CD4-positive, alpha-beta memory T cell (primary cell): ENCODE measurements at regions of chr1 and their contacts with region 1.

Region 1: DNA sequence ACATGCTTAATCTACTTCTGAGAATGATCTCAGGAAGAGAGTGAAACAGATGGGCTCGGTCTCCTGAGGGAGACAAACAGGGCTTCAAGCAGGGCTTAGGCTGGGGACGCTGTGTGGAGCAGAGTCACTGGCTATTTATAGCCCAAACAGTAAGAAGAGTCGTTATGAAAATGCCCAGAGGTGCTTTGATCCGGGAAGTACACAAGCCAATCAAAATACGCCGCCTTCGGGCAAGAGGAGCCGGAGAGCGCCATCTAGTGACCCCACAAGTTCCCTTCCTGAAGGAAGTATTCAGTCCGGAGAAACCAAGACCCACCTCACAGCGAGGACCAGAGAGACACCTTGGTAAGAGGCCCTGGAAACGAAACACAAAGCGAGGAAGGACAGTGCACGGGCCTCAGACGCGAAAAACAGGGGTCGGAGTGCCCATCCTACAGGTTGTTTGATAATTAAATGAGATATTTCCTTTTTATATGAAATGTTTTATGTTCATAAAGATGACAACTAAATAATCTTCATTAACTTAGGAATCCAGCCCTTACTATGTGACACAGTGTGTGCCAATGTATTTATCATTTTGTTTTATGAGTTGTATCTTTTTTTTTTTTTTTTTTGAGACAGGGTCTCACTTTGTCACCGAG is 25.0 kb upstream of the SCCPDH start:
- DNase-seq: peak; percentile 74 to 80 (median 77)
- H3K4me3 ChIP-seq: peak overlapping the region in 1 of 2 donors; percentile 4
- H3K4me3 Mint-ChIP-seq: peak overlapping the region; percentile 38 to 85 (median 74)
- H3K27ac ChIP-seq: no peak overlapping the region
- H3K27ac Mint-ChIP-seq: peak overlapping the region in 5 of 7 donors; percentile 11 to 53 (median 31)
- H3K4me1 ChIP-seq: peaks cover 10% of the 10 kb centered on the region
- H3K4me1 Mint-ChIP-seq: peaks cover 3 to 13% (median 6%) of the 10 kb centered on the region in 4 donors
- H3K27me3 ChIP-seq: no peaks in the 10 kb centered on the region
- H3K27me3 Mint-ChIP-seq: no peaks in the 10 kb centered on the region

Region 2: DNA sequence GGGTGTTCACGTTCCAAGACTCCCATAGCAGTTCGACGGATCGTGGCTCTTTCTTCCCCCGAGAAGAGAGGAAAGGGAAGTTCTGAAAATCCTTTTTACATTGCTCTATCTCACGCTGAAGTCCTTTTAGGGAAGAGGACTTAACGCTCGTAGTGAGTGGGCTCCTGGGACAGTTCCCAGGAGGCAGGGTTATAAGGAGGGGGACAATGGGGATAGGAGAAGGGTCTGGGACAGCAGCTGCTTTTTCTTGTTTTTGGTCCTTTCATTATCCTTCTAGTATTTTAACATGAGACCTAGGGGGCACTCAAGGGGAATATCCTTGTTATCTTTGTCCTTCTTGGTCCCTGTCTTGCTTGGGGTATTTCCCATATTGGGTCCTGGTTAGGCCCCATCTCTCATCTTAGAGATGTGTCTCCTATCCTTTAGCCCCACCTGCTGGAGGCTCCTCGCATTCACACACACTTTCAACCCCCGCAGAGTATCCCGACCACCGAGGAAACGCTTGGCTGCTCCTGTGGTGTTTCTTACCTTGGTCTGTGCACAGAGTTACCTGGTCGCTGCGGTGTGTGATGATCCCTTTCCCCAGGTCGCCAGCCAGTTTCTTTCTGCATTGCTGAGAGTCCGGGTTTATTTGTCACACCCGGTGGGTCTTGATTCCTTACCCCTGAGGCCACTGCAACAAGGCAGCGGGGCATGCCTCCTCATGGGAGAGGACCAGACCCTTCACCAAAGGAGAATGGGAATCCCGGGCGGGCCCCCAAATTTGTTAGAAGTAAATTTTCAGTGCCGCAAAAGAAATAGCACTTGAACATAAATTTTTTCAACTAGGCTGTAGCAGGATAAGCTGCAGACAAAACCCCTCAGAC is 54.7 kb after region 1 on chr1:
- CTCF ChIA-PET with region 1: no interaction called
- POLR2A ChIA-PET with region 1: no interaction called
- intact Hi-C with region 1: loop called (anchors 5 kb)
- DNase-seq: peak; percentile 27 to 49 (median 37)
- H3K4me3 ChIP-seq: no peak overlapping the region
- H3K4me3 Mint-ChIP-seq: no peak overlapping the region
- H3K27ac ChIP-seq: no peak overlapping the region
- H3K27ac Mint-ChIP-seq: peak overlapping the region in 1 of 7 donors; percentile 25
- H3K4me1 ChIP-seq: no peaks in the 10 kb centered on the region
- H3K4me1 Mint-ChIP-seq: no peaks in the 10 kb centered on the region
- H3K27me3 ChIP-seq: no peaks in the 10 kb centered on the region
- H3K27me3 Mint-ChIP-seq: no peaks in the 10 kb centered on the region